ENCODE measurements at regions of chr1 and their contacts with region 1.

Region 1: GRCh38 chr1:84724128-84724860 is 34.0 kb upstream of the SSX2IP start:
- DNase-seq: no peak
- ATAC-seq: peak; percentile 72
- H3K4me3 ChIP-seq: no peak overlapping the region
- H3K27ac ChIP-seq: no peak overlapping the region
- H3K4me1 ChIP-seq: no peaks in the 10 kb centered on the region
- H3K27me3 ChIP-seq: no peaks in the 10 kb centered on the region
- CTCF ChIP-seq: peak; percentile 42 to 77 (median 72)
- EP300 ChIP-seq: no peak
- POLR2A ChIP-seq: no peak
- RAD21 ChIP-seq: peak; percentile 61

Region 2: DNA sequence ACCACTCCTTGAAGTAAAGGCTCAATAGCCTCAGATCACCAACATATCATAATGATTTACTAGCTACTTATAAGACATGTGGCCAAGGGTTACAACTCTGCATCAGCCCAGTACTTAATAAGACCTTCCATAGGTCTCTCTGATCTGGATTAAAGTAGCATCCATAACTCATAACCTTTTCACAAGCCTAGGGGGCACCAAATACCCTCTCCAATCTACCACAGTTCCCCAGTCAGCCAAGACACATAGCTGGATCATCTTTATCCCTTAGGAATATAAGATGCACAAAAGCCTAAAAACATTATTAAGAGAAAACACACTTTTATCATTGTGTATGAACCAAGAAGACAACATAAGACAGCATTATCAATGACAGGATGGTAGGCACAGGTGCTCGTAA is 56.1 kb before region 1 on chr1:
- CTCF ChIA-PET with region 1: interaction called, 48 read pairs
- POLR2A ChIA-PET with region 1: no interaction called
- RAD21 ChIA-PET with region 1: interaction called, 10 read pairs
- SMC1A ChIA-PET with region 1: interaction called, 15 read pairs
- in situ Hi-C with region 1: no loop called
- intact Hi-C with region 1: loop called (anchors 1 kb)
- DNase-seq: no peak
- ATAC-seq: peak; percentile 72
- H3K4me3 ChIP-seq: no peak overlapping the region
- H3K27ac ChIP-seq: no peak overlapping the region
- H3K4me1 ChIP-seq: no peaks in the 10 kb centered on the region
- H3K27me3 ChIP-seq: no peaks in the 10 kb centered on the region
- CTCF ChIP-seq: peak in 2 of 3 experiments; percentile 38 to 41; a peak in 4 of 6 replicates
- EP300 ChIP-seq: no peak
- POLR2A ChIP-seq: no peak
- RAD21 ChIP-seq: peak; percentile 58

Region 3: GRCh38 chr1:84690397-84691121 is 33.7 kb before region 1 on chr1 and contains the start of gene SSX2IP:
- CTCF ChIA-PET with region 1: interaction called, 52 read pairs
- POLR2A ChIA-PET with region 1: interaction called, 5 read pairs
- RAD21 ChIA-PET with region 1: interaction called, 15 read pairs
- SMC1A ChIA-PET with region 1: interaction called, 113 read pairs
- in situ Hi-C with region 1: no loop called
- intact Hi-C with region 1: no loop called
- DNase-seq: peak; percentile 65
- ATAC-seq: peak; percentile 93
- H3K4me3 ChIP-seq: peak within 1 kb of the TSS; percentile 98
- H3K27ac ChIP-seq: peak within 1 kb of the TSS; percentile 78
- H3K4me1 ChIP-seq: peaks cover 17% of the 10 kb centered on the region; the same call in 1 of the 2 replicates
- H3K27me3 ChIP-seq: no peaks in the 10 kb centered on the region
- CTCF ChIP-seq: no peak
- EP300 ChIP-seq: no peak
- POLR2A ChIP-seq: peak; percentile 85
- RAD21 ChIP-seq: no peak
- polyA plus RNA-seq, gene SSX2IP: 3.3 to 3.9 TPM

Region 4: GRCh38 chr1:84698151-84699110 is 25.9 kb before region 1 on chr1:
- CTCF ChIA-PET with region 1: interaction called, 8 read pairs
- POLR2A ChIA-PET with region 1: interaction called, 11 read pairs
- RAD21 ChIA-PET with region 1: interaction called, 3 read pairs
- SMC1A ChIA-PET with region 1: interaction called, 113 read pairs
- in situ Hi-C with region 1: no loop called
- intact Hi-C with region 1: no loop called
- DNase-seq: no peak
- ATAC-seq: no peak
- H3K4me3 ChIP-seq: no peak overlapping the region
- H3K27ac ChIP-seq: no peak overlapping the region
- H3K4me1 ChIP-seq: peaks cover 4% of the 10 kb centered on the region; the same call in 1 of the 2 replicates
- H3K27me3 ChIP-seq: no peaks in the 10 kb centered on the region; a peak in 1 of 4 replicates
- CTCF ChIP-seq: no peak
- EP300 ChIP-seq: no peak
- POLR2A ChIP-seq: no peak
- RAD21 ChIP-seq: no peak

Region 5: DNA sequence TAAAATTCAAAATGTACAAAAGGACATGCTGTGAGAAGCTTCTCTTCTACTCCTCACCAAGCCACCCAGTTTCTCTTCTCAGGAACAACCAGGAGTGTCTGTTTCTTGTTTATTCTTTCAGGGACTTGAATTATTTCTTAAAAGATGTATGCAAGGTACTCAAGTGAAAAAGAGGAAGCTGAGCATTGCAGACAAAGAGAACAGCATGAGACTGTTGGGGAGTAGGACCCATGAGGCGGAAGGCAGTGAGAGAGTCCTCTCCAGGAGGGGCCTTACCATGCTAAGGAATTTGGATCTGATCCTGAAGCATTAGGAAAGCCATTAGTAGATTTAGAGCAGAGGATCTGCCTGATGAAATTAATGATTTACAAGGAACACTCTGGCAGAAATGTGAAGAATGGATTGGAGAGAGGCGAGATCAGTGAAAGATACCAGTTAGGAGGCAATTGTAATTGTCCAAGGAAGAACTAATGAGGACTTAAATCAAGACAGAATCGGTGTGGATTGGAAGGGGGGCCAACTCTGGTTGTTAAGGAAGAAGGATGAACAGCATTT is 19.3 kb before region 1 on chr1:
- CTCF ChIA-PET with region 1: interaction called, 10 read pairs
- POLR2A ChIA-PET with region 1: interaction called, 11 read pairs
- RAD21 ChIA-PET with region 1: interaction called, 12 read pairs
- SMC1A ChIA-PET with region 1: interaction called, 113 read pairs
- in situ Hi-C with region 1: no loop called
- intact Hi-C with region 1: no loop called
- DNase-seq: no peak
- ATAC-seq: peak; percentile 77
- H3K4me3 ChIP-seq: no peak overlapping the region
- H3K27ac ChIP-seq: no peak overlapping the region
- H3K4me1 ChIP-seq: peaks cover 3% of the 10 kb centered on the region; the same call in 1 of the 2 replicates
- H3K27me3 ChIP-seq: no peaks in the 10 kb centered on the region; a peak in 1 of 4 replicates
- CTCF ChIP-seq: no peak
- EP300 ChIP-seq: no peak
- POLR2A ChIP-seq: no peak
- RAD21 ChIP-seq: no peak

Region 6: DNA sequence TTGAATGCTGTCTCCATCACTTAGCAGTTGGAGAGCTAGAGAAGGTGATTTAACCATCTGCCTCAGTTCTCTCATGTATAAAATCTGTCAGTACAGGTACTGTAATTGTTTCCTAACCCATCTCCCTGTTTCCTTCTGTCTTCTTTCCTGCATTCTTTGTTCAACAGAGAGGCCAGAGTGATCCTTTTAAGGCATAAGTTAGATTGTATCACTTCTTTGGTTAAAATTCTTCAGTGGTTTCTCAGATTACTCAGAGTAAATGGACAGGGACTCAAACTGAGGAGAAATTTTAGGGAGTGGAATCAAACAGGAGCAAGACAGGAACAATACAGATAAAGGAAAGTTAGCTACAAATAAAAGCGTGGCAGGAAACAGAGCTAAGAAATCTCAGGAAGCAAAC is 11.2 kb after region 1 on chr1:
- CTCF ChIA-PET with region 1: interaction called, 9 read pairs
- POLR2A ChIA-PET with region 1: interaction called, 4 read pairs
- RAD21 ChIA-PET with region 1: interaction called, 5 read pairs
- SMC1A ChIA-PET with region 1: interaction called, 37 read pairs
- in situ Hi-C with region 1: no loop called
- intact Hi-C with region 1: no loop called
- DNase-seq: no peak
- ATAC-seq: no peak
- H3K4me3 ChIP-seq: no peak overlapping the region
- H3K27ac ChIP-seq: no peak overlapping the region
- H3K4me1 ChIP-seq: no peaks in the 10 kb centered on the region
- H3K27me3 ChIP-seq: no peaks in the 10 kb centered on the region
- CTCF ChIP-seq: no peak
- EP300 ChIP-seq: no peak
- POLR2A ChIP-seq: no peak
- RAD21 ChIP-seq: no peak

Region 7: GRCh38 chr1:84742653-84743052 is 18.4 kb after region 1 on chr1:
- CTCF ChIA-PET with region 1: interaction called, 9 read pairs
- POLR2A ChIA-PET with region 1: interaction called, 4 read pairs
- RAD21 ChIA-PET with region 1: interaction called, 3 read pairs
- SMC1A ChIA-PET with region 1: interaction called, 37 read pairs
- in situ Hi-C with region 1: no loop called
- intact Hi-C with region 1: no loop called
- DNase-seq: no peak
- ATAC-seq: peak; percentile 86
- H3K4me3 ChIP-seq: no peak overlapping the region
- H3K27ac ChIP-seq: no peak overlapping the region
- H3K4me1 ChIP-seq: no peaks in the 10 kb centered on the region
- H3K27me3 ChIP-seq: no peaks in the 10 kb centered on the region; a peak in 2 of 4 replicates
- CTCF ChIP-seq: no peak
- EP300 ChIP-seq: no peak
- POLR2A ChIP-seq: no peak
- RAD21 ChIP-seq: no peak

Region 8: GRCh38 chr1:85734931-85735330 is 1010.6 kb after region 1 on chr1:
- CTCF ChIA-PET with region 1: no interaction called
- POLR2A ChIA-PET with region 1: no interaction called
- RAD21 ChIA-PET with region 1: no interaction called
- SMC1A ChIA-PET with region 1: no interaction called
- in situ Hi-C with region 1: no loop called
- intact Hi-C with region 1: no loop called
- DNase-seq: no peak
- ATAC-seq: no peak
- H3K4me3 ChIP-seq: no peak overlapping the region
- H3K27ac ChIP-seq: no peak overlapping the region
- H3K4me1 ChIP-seq: no peaks in the 10 kb centered on the region
- H3K27me3 ChIP-seq: no peaks in the 10 kb centered on the region
- CTCF ChIP-seq: no peak
- EP300 ChIP-seq: no peak
- POLR2A ChIP-seq: no peak
- RAD21 ChIP-seq: no peak

Measured in GM12878 (cell line).